Mammary epithelial cell (primary cell): ENCODE measurements at regions of chr19 and their contacts with region 1.

Region 1: GRCh38 chr19:9934132-9934950 is 2.0 kb downstream of the OLFM2 start:
- DNase-seq: peak; percentile 59
- H3K4me3 ChIP-seq: no peak overlapping the region
- H3K27ac ChIP-seq: no peak overlapping the region
- H3K4me1 ChIP-seq: no peaks in the 10 kb centered on the region
- H3K27me3 ChIP-seq: peaks cover 2% of the 10 kb centered on the region
- CTCF ChIP-seq: peak; percentile 82 to 95

Region 2: GRCh38 chr19:9945319-9945966 is 11.1 kb after region 1 on chr19:
- CTCF ChIA-PET with region 1: no interaction called
- dilution Hi-C with region 1: no loop called
- in situ Hi-C with region 1: no loop called
- intact Hi-C with region 1: no loop called
- DNase-seq: peak; percentile 72
- H3K4me3 ChIP-seq: no peak overlapping the region
- H3K27ac ChIP-seq: no peak overlapping the region
- H3K4me1 ChIP-seq: peaks cover 8% of the 10 kb centered on the region
- H3K27me3 ChIP-seq: no peaks in the 10 kb centered on the region
- CTCF ChIP-seq: no peak

Region 3: DNA sequence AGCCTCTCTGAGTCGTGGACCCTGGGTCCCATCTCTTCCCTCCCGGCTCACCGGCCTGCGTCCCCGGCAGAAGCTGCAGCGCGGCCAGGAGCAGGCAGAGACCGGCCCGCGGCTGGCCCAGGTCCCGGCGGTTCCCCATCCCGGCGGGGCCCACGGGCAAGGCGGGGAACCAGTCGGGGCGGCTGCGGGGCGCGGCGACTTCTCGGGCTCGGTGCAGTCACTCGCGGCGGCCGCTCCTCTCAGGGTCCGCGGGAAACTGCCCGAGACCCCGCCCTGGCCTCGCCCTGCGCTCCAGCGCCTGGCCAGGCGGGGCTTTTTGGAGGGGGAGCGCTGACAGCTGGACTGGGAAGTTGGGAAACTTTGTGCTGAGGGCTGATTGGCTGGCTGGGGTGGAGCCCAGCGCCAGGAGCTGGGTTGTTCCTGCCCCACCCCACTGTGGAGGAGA is 75.9 kb after region 1 on chr19 and contains the start of gene COL5A3:
- CTCF ChIA-PET with region 1: no interaction called
- dilution Hi-C with region 1: loop called (anchors 5 kb)
- in situ Hi-C with region 1: no loop called
- intact Hi-C with region 1: no loop called
- DNase-seq: peak; percentile 51
- H3K4me3 ChIP-seq: peak within 1 kb of the TSS; percentile 33 to 43 (median 36)
- H3K27ac ChIP-seq: no peak within 1 kb of the TSS
- H3K4me1 ChIP-seq: peaks cover 15% of the 10 kb centered on the region
- H3K27me3 ChIP-seq: no peaks in the 10 kb centered on the region
- CTCF ChIP-seq: no peak
- total RNA-seq, gene COL5A3: 0.33 to 4.5 TPM

Region 4: DNA sequence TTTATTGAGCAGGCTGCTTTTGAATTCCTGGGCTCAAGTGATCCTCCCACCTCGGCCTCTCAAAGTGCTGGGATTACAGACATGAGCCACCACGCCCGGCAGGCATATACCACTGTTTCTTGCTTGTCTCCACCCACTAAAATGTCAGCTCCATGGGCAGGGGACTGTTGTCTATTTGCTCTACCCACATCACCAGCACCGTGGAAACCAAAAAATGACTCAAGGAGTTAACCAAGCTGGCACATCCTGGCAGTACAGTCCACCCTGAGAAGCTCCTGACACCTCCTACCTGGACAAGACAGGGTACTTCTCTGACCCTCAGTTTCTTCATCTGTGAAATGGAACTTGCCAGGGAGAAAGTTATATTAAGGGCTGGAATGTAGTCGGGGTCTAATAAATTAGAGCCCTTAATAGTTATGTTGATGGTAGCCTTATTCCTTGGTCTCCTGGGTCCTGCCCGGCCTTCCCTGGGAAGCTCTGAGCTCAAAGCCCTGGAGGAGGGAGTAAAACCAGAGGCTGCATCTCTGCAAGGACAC is 92.9 kb after region 1 on chr19:
- CTCF ChIA-PET with region 1: no interaction called
- dilution Hi-C with region 1: no loop called
- in situ Hi-C with region 1: loop called (anchors 5 kb)
- intact Hi-C with region 1: loop called (anchors 1 kb)
- DNase-seq: peak; percentile 60
- H3K4me3 ChIP-seq: no peak overlapping the region
- H3K27ac ChIP-seq: no peak overlapping the region
- H3K4me1 ChIP-seq: peaks cover 11% of the 10 kb centered on the region
- H3K27me3 ChIP-seq: peaks cover 4% of the 10 kb centered on the region
- CTCF ChIP-seq: no peak

Region 5: GRCh38 chr19:10135551-10136334 is 201.4 kb after region 1 on chr19:
- CTCF ChIA-PET with region 1: no interaction called
- dilution Hi-C with region 1: no loop called
- in situ Hi-C with region 1: no loop called
- intact Hi-C with region 1: loop called (anchors 1 kb)
- DNase-seq: peak; percentile 67
- H3K4me3 ChIP-seq: peak overlapping the region in 1 of 3 experiments; percentile 29
- H3K27ac ChIP-seq: no peak overlapping the region
- H3K4me1 ChIP-seq: peaks cover 10% of the 10 kb centered on the region
- H3K27me3 ChIP-seq: no peaks in the 10 kb centered on the region
- CTCF ChIP-seq: peak in 1 of 2 donors; percentile 36

Region 6: DNA sequence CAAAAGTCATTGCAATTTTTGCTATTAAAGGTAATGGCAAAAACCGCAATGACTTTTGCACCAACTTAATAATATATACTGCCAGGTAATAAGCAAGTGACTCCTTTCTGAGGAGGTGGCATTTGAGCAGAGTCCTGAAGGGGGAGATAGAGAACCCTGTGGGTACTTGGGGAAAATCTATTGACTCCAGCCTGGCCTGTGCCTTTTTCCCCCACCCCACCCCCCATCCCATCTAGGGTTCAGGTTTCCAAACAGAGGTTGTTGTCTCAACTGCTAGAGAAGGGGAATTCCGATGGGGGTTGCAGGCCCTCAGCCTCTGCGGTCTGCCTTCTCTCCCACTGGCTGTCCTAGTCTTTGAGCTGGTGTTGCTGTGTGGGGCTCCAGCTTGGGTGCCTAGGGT is 285.3 kb after region 1 on chr19:
- CTCF ChIA-PET with region 1: no interaction called
- dilution Hi-C with region 1: no loop called
- in situ Hi-C with region 1: no loop called
- intact Hi-C with region 1: no loop called
- DNase-seq: peak; percentile 49
- H3K4me3 ChIP-seq: no peak overlapping the region
- H3K27ac ChIP-seq: no peak overlapping the region
- H3K4me1 ChIP-seq: no peaks in the 10 kb centered on the region
- H3K27me3 ChIP-seq: no peaks in the 10 kb centered on the region
- CTCF ChIP-seq: peak; percentile 40 to 42

Region 7: GRCh38 chr19:10251792-10252694 is 317.7 kb after region 1 on chr19 and contains the start of gene MRPL4:
- CTCF ChIA-PET with region 1: no interaction called
- dilution Hi-C with region 1: loop called (anchors 25 kb)
- in situ Hi-C with region 1: loop called (anchors 10 kb)
- intact Hi-C with region 1: loop called (anchors 1 kb)
- DNase-seq: peak; percentile 99
- H3K4me3 ChIP-seq: peak within 1 kb of the TSS; percentile 76 to 97 (median 91)
- H3K27ac ChIP-seq: peak within 1 kb of the TSS; percentile 63
- H3K4me1 ChIP-seq: peaks cover 13% of the 10 kb centered on the region
- H3K27me3 ChIP-seq: no peaks in the 10 kb centered on the region
- CTCF ChIP-seq: no peak
- total RNA-seq, gene MRPL4: 55.8 to 89.1 TPM

Region 8: DNA sequence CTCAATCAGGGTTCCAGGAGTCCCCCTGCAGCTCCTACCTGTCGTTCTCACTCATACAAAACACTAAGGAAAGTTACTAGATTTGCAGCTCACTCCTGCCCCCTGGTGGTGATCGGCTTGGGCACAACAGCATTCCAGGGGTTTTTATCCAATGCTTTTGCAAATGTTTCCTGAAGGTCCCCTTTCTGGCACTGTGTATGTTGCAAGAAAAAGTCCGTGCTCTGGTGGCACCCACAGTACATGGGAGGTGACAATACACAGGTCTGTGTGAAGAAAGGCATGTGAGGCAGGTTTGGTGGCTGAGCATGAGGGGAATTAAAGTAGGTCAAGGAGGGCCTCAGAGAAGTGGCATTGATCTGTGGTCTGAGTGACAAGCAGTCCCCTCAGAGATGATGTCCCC is 454.6 kb after region 1 on chr19:
- CTCF ChIA-PET with region 1: no interaction called
- dilution Hi-C with region 1: no loop called
- in situ Hi-C with region 1: loop called (anchors 10 to 25 kb)
- intact Hi-C with region 1: loop called (anchors 1 kb)
- DNase-seq: peak; percentile 55
- H3K4me3 ChIP-seq: no peak overlapping the region
- H3K27ac ChIP-seq: no peak overlapping the region
- H3K4me1 ChIP-seq: no peaks in the 10 kb centered on the region
- H3K27me3 ChIP-seq: no peaks in the 10 kb centered on the region
- CTCF ChIP-seq: peak; percentile 92 to 95